ENCODE measurements at regions of chr1 and their contacts with region 1.

Region 1: DNA sequence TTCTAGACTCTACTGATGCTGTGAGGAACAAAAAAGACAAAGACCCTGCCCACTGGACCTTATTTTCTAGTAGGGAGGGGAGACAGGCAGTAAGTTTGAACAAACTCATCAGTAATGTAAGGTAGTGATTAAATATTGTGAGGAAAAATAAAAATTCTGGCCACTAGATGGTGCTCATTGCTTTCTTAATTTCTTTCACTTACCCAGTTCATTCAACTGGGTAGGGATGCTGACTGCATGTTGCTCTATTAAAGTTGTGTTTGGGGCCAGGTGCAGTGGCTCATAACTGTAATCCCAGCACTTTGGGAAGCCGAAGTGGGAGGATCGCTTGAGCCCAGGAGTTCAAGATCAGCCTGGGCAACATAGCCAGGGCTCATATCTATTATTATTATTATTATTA is 6.3 kb upstream of the KYAT3 start:
- DNase-seq: peak; percentile 35
- H3K4me3 ChIP-seq: no peak overlapping the region
- H3K27ac ChIP-seq: no peak overlapping the region
- H3K4me1 ChIP-seq: peaks cover 0 to 2% of the 10 kb centered on the region in 2 donors
- H3K27me3 ChIP-seq: no peaks in the 10 kb centered on the region
- CTCF ChIP-seq: peak in 5 of 6 experiments; percentile 29 to 75 (median 44)
- POLR2A ChIP-seq: no peak

Region 2: GRCh38 chr1:89179343-89179742 is 180.6 kb after region 1 on chr1:
- intact Hi-C with region 1: no loop called
- DNase-seq: no peak
- H3K4me3 ChIP-seq: no peak overlapping the region
- H3K27ac ChIP-seq: no peak overlapping the region
- H3K4me1 ChIP-seq: no peaks in the 10 kb centered on the region
- H3K27me3 ChIP-seq: no peaks in the 10 kb centered on the region
- CTCF ChIP-seq: no peak
- POLR2A ChIP-seq: no peak

Region 3: GRCh38 chr1:89358287-89358893 is 359.7 kb after region 1 on chr1:
- intact Hi-C with region 1: loop called (anchors 5 kb)
- DNase-seq: peak; percentile 74 to 85
- H3K4me3 ChIP-seq: no peak overlapping the region
- H3K27ac ChIP-seq: no peak overlapping the region
- H3K4me1 ChIP-seq: peaks cover 0 to under 1% of the 10 kb centered on the region in 2 donors
- H3K27me3 ChIP-seq: no peaks in the 10 kb centered on the region
- CTCF ChIP-seq: peak; percentile 19 to 84 (median 68)
- POLR2A ChIP-seq: no peak

Measured in thyroid gland (tissue), 4 donors.